Cardiac septum (tissue), 1 donor: ENCODE measurements at regions of chr19 and their contacts with region 1.

Region 1: DNA sequence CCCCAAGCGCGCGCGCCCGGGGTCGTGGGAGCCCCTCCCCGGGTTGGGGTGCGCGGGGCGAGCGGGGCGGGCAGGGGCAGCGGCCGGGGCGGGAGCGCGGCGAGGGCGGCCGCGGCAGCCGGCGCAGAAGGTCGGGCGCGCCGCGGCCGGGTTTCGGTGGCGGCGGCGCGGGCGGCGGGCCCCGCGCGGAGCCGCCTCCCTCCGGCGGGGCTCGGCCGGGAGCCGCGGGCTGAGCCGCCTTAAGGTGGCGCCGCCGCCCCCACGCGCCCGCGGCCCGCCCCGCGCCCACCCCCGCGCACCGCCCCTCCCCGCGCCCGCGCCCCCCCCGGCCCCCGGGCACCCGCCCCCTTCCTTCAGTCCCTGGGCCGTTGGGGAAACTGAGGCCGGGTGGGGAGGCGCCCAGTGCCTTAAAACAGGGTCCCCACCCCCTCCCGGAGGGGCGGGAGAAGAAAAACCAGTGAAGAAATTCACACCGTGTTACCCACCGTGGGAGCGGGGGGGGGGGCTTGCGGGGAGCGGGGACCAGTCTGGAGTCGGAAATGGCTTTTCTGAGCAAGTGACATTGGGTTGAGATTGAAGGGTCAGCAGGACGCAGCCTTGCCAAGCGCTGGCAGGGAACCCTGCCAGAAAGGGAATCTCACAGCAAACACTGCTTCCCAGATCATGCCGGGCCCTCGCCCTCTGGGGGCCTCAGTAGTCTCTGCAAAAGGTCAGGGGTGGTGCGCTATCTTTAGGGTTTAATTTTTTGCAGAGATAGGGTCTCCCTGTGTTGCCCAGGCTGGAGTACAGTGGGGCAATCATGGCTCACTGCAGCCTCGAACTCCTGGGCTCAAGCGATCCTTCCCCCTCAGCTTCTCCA is at the start of gene TLE2:
- DNase-seq: no peak
- total RNA-seq, gene TLE2: 48.0 TPM

Region 2: DNA sequence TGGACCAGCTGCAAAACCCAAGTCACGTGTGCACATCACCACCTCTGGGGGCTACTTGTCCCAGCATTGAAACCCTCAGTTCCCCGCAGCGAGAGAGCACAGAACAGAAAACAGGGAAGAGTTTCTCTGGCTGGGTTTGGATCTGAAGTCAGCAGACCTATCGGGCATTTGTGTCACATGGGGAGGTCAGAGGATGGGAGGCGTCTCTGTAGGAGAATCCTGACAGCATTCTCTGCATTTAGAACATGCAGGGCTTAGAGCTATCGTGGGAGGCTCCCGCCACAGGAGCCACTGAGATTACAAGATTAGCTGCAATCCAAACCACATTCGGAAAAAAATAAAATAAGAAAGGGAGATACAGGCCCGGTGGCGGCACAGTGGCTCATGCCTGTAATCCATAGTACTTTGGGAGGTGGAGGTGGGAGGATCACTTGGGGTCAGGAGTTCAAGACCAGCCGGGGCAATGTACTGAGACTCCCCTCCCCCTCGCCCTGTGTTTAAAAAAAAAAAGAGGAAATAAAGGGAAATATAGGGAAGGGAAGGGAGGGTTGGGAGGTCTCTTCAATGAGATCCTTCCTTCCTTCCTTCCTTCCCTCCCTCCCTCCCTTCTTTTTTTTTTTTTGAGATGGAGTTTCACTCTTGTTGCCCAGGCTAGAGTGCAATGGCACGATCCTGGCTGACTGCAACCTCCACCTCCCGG is 54.8 kb before region 1 on chr19:
- intact Hi-C with region 1: no loop called
- DNase-seq: no peak

Region 3: GRCh38 chr19:2986951-2987524 is 42.3 kb before region 1 on chr19:
- intact Hi-C with region 1: loop called (anchors 5 kb)
- DNase-seq: no peak